ENCODE measurements at regions of chr13 and their contacts with region 1.

Region 1: GRCh38 chr13:32911506-32911905 is 104.7 kb upstream of the KL start:
- DNase-seq: no peak
- ATAC-seq: peak; percentile 99
- H3K4me3 ChIP-seq: no peak overlapping the region
- H3K27ac ChIP-seq: no peak overlapping the region
- H3K4me1 ChIP-seq: no peaks in the 10 kb centered on the region
- H3K27me3 ChIP-seq: no peaks in the 10 kb centered on the region
- CTCF ChIP-seq: peak; percentile 55 to 71 (median 71)
- EP300 ChIP-seq: no peak
- POLR2A ChIP-seq: no peak
- RAD21 ChIP-seq: peak; percentile 85

Region 2: DNA sequence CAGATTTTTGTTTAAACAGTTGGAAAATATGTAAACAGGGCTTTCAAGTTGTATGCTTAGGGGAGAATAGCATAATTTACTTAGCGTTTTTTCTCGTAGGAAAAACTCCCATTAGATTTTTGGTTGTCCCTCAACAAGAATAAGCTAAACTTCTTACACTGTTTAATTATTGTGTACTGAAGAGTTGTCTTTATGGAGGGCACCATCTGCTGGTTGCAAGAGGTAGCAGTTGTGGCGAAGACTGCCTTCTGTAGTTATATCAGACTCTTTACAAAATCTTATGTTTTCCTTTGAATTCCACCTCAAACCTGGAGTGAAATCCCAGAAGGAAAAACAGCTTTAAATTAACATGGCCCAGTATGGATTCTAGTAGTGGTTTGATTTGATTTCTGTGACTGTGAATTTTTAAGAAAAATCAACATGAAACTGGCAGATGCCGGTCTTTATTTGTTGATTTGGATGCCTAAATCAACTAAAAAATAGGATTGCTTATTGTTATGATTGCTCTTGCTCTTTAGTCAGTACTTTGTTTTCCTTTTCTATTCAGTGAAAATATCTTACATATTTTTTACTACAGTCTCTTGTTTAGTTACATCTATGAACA is 271.9 kb before region 1 on chr13:
- CTCF ChIA-PET with region 1: interaction called, 3 read pairs
- POLR2A ChIA-PET with region 1: no interaction called
- RAD21 ChIA-PET with region 1: interaction called, 8 read pairs
- SMC1A ChIA-PET with region 1: interaction called, 5 read pairs
- in situ Hi-C with region 1: no loop called
- intact Hi-C with region 1: loop called (anchors 10 kb)
- DNase-seq: peak; percentile 15
- ATAC-seq: peak; percentile 91
- H3K4me3 ChIP-seq: no peak overlapping the region
- H3K27ac ChIP-seq: no peak overlapping the region
- H3K4me1 ChIP-seq: peaks cover 9% of the 10 kb centered on the region
- H3K27me3 ChIP-seq: no peaks in the 10 kb centered on the region
- CTCF ChIP-seq: peak; percentile 74 to 83 (median 75)
- EP300 ChIP-seq: no peak
- POLR2A ChIP-seq: no peak
- RAD21 ChIP-seq: peak; percentile 73

Region 3: GRCh38 chr13:32650705-32651311 is 260.7 kb before region 1 on chr13:
- CTCF ChIA-PET with region 1: interaction called, 7 read pairs
- POLR2A ChIA-PET with region 1: no interaction called
- RAD21 ChIA-PET with region 1: interaction called, 6 read pairs
- SMC1A ChIA-PET with region 1: interaction called, 13 read pairs
- in situ Hi-C with region 1: no loop called
- intact Hi-C with region 1: loop called (anchors 10 kb)
- DNase-seq: peak; percentile 30
- ATAC-seq: peak; percentile 84
- H3K4me3 ChIP-seq: no peak overlapping the region
- H3K27ac ChIP-seq: no peak overlapping the region; the same call in 1 of the 2 replicates
- H3K4me1 ChIP-seq: peaks cover 20% of the 10 kb centered on the region
- H3K27me3 ChIP-seq: no peaks in the 10 kb centered on the region
- CTCF ChIP-seq: peak; percentile 78 to 88 (median 83)
- EP300 ChIP-seq: no peak
- POLR2A ChIP-seq: no peak
- RAD21 ChIP-seq: peak; percentile 71

Region 4: GRCh38 chr13:32669030-32669646 is 242.4 kb before region 1 on chr13:
- CTCF ChIA-PET with region 1: interaction called, 22 read pairs
- POLR2A ChIA-PET with region 1: no interaction called
- RAD21 ChIA-PET with region 1: interaction called, 14 read pairs
- SMC1A ChIA-PET with region 1: interaction called, 5 read pairs
- in situ Hi-C with region 1: no loop called
- intact Hi-C with region 1: no loop called
- DNase-seq: no peak
- ATAC-seq: peak; percentile 78
- H3K4me3 ChIP-seq: no peak overlapping the region
- H3K27ac ChIP-seq: no peak overlapping the region
- H3K4me1 ChIP-seq: no peaks in the 10 kb centered on the region
- H3K27me3 ChIP-seq: no peaks in the 10 kb centered on the region
- CTCF ChIP-seq: peak; percentile 57 to 65 (median 58); a peak in 5 of 6 replicates
- EP300 ChIP-seq: no peak
- POLR2A ChIP-seq: no peak
- RAD21 ChIP-seq: peak; percentile 68

Region 5: DNA sequence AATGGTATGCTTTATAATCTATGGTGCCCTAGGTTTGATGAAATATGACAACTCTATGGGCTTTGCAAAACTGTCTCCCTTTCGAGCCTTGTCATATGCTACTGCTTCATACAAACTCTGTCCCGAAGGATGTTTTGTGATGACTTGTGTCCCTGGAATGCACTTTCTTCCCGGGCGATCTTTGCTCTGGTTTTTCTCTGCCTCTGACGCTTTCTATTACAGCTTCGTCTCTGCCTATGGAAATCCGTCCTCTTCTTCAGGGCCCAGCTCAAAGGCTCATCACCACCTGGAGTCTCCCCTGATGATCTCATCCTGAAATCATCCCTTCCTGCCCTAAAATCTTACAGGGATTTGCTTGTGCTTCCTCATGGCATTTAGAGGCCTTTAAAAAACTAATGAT is 86.8 kb before region 1 on chr13:
- CTCF ChIA-PET with region 1: interaction called, 8 read pairs
- POLR2A ChIA-PET with region 1: interaction called, 4 read pairs
- RAD21 ChIA-PET with region 1: interaction called, 8 read pairs
- SMC1A ChIA-PET with region 1: interaction called, 24 read pairs
- in situ Hi-C with region 1: no loop called
- intact Hi-C with region 1: no loop called
- DNase-seq: no peak
- ATAC-seq: no peak
- H3K4me3 ChIP-seq: no peak overlapping the region
- H3K27ac ChIP-seq: no peak overlapping the region
- H3K4me1 ChIP-seq: peaks cover 12% of the 10 kb centered on the region
- H3K27me3 ChIP-seq: no peaks in the 10 kb centered on the region
- CTCF ChIP-seq: no peak
- EP300 ChIP-seq: no peak
- POLR2A ChIP-seq: no peak
- RAD21 ChIP-seq: no peak

Region 6: GRCh38 chr13:32924886-32925285 is 13.4 kb after region 1 on chr13:
- CTCF ChIA-PET with region 1: interaction called, 7 read pairs
- POLR2A ChIA-PET with region 1: no interaction called
- RAD21 ChIA-PET with region 1: interaction called, 5 read pairs
- SMC1A ChIA-PET with region 1: interaction called, 32 read pairs
- in situ Hi-C with region 1: no loop called
- intact Hi-C with region 1: no loop called
- DNase-seq: no peak
- ATAC-seq: no peak
- H3K4me3 ChIP-seq: no peak overlapping the region
- H3K27ac ChIP-seq: no peak overlapping the region
- H3K4me1 ChIP-seq: no peaks in the 10 kb centered on the region
- H3K27me3 ChIP-seq: no peaks in the 10 kb centered on the region
- CTCF ChIP-seq: no peak
- EP300 ChIP-seq: no peak
- POLR2A ChIP-seq: no peak
- RAD21 ChIP-seq: no peak

Region 7: GRCh38 chr13:33017323-33017929 is 105.9 kb after region 1 on chr13:
- CTCF ChIA-PET with region 1: interaction called, 4 read pairs
- POLR2A ChIA-PET with region 1: interaction called, 5 read pairs
- RAD21 ChIA-PET with region 1: interaction called, 9 read pairs
- SMC1A ChIA-PET with region 1: interaction called, 3 read pairs
- in situ Hi-C with region 1: no loop called
- intact Hi-C with region 1: loop called (anchors 2 kb)
- DNase-seq: peak; percentile 65
- ATAC-seq: peak; percentile 88
- H3K4me3 ChIP-seq: peak overlapping the region; percentile 69
- H3K27ac ChIP-seq: no peak overlapping the region
- H3K4me1 ChIP-seq: peaks cover 12% of the 10 kb centered on the region
- H3K27me3 ChIP-seq: peaks cover 0 to 6% of the 10 kb centered on the region in 2 experiments; a peak in 1 of 4 replicates
- CTCF ChIP-seq: peak; percentile 66 to 82 (median 74); a peak in 5 of 6 replicates
- EP300 ChIP-seq: peak in 1 of 2 experiments; percentile 24; a peak in 1 of 4 replicates
- POLR2A ChIP-seq: no peak
- RAD21 ChIP-seq: peak; percentile 83

Measured in GM12878 (cell line).